ENCODE measurements at regions of chr3 and their contacts with region 1.

Region 1: DNA sequence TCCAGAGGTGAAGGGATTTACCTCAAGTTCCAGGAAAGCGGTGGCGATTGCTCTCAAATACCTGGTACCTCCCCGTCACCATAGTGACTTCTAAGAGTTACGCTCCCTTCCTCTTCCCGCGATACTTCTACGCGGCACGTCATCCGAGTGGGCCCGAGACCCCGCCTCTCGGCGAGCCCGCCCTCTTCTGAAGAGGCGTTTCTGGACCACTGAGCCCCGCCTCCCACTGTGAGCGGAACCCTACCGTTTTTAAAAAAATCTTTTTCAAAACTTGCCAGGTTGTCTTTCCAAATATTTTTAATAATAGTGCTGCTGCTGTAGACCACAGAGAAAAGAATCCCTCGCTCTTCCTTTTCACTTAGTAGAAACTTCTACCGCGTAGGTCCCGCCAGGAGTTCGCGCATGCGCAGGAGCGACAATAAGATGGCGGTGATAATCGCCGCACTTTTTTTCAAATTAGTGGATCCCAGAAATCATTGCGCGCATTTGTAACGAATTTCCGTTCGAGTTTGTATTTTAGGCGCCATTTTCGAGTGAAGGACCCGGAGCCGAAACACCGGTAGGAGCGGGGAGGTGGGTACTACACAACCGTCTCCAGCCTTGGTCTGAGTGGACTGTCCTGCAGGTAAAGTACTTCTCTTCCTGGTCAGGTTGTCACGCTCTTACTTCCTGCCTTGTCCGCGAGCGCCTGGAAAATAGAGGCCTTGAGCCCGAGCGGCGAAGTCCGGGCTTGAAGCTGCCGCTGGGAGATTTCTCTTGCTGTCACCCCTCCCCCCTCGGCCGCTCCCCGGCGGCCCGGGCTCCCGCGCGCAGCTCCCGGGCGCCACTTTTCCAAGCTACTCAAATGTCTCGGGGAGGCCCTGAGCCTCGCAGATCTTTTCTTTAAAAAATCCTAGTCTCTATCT is at the starts of genes IFT80 and SMC4:
- DNase-seq: peak; percentile 87 to 98 (median 96)
- ATAC-seq: peak; percentile 95
- H3K4me3 ChIP-seq: peak within 1 kb of the TSS; percentile 84 to 85
- H3K4me3 Mint-ChIP-seq: peak within 1 kb of the TSS; percentile 90
- H3K27ac ChIP-seq: peak within 1 kb of the TSS; percentile 85 to 92
- H3K27ac Mint-ChIP-seq: peak within 1 kb of the TSS; percentile 99
- H3K4me1 ChIP-seq: peaks cover 35% of the 10 kb centered on the region
- H3K4me1 Mint-ChIP-seq: peaks cover 56% of the 10 kb centered on the region
- H3K27me3 ChIP-seq: peaks cover 0 to 8% of the 10 kb centered on the region in 2 experiments
- H3K27me3 Mint-ChIP-seq: peaks cover 26% of the 10 kb centered on the region
- CTCF ChIP-seq: no peak
- total RNA-seq, gene IFT80: 9.9 to 12.7 TPM
- total RNA-seq, gene SMC4: 40.8 to 43.5 TPM

Region 2: GRCh38 chr3:159988617-159989271 is 410.6 kb before region 1 on chr3 and contains the start of gene IL12A:
- CTCF ChIA-PET with region 1: no interaction called
- POLR2A ChIA-PET with region 1: no interaction called
- intact Hi-C with region 1: loop called in 1 of 2 experiments (anchors 5 kb)
- DNase-seq: peak; percentile 68 to 89 (median 84)
- ATAC-seq: peak; percentile 98
- H3K4me3 ChIP-seq: peak within 1 kb of the TSS; percentile 70 to 74
- H3K4me3 Mint-ChIP-seq: peak within 1 kb of the TSS; percentile 87
- H3K27ac ChIP-seq: peak within 1 kb of the TSS; percentile 25 to 28
- H3K27ac Mint-ChIP-seq: peak within 1 kb of the TSS; percentile 27
- H3K4me1 ChIP-seq: peaks cover 15% of the 10 kb centered on the region
- H3K4me1 Mint-ChIP-seq: peaks cover 30% of the 10 kb centered on the region
- H3K27me3 ChIP-seq: no peaks in the 10 kb centered on the region
- H3K27me3 Mint-ChIP-seq: no peaks in the 10 kb centered on the region
- CTCF ChIP-seq: peak; percentile 86
- total RNA-seq, gene IL12A: 2.3 to 2.9 TPM

Region 3: DNA sequence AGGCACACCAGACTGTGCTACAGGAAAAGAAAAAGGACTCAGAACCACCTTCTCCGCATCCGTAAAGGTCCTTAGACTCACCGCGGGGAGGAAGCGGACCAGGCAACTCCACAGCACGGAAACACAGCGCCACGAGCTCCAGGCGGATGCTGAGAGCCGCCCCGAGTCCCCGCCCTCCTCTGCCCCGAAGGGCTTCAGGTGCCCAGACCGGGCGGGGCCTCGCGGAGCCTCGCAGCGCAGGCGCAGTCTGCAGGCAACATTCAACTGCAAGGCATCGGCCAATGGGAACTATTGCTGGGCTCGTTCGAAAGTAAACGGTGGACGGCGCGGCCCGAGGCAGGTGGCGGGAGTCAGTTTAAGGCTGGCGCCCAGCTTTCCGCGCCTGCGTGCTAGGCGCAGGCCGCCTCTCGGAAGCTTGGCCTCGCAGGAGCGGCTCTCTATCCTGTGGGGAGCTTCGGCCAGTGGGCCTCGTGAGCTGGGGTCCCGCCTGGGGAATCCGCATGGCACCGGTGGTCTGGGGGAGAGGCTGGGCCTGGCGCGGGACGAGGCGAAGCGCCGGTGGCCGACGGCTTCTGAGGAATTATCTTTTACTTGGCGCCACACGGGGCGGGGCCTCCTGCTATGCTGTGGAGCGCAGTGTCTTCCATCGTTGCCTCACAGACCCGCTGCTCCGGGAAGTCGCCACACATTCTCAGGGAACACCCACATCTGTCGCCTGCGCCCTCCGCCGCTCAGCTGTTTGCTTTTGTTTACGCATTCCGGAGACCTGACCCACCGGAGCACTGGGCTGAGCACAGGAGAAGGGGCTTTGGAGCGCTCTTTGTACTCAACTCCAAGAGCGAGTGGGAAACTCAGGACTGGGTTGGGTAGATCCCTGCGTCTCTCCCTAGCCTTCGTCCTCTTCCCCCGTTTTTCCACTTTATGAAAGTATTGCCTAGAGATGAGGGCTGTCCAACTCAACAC is 50.5 kb after region 1 on chr3 and contains the start of gene TRIM59:
- CTCF ChIA-PET with region 1: no interaction called
- POLR2A ChIA-PET with region 1: interaction called, 13 read pairs
- intact Hi-C with region 1: loop called (anchors 1 to 2 kb)
- DNase-seq: peak; percentile 92 to 99 (median 95)
- ATAC-seq: peak; percentile 96
- H3K4me3 ChIP-seq: peak within 1 kb of the TSS; percentile 80 to 91
- H3K4me3 Mint-ChIP-seq: peak within 1 kb of the TSS; percentile 95
- H3K27ac ChIP-seq: peak within 1 kb of the TSS; percentile 60 to 85
- H3K27ac Mint-ChIP-seq: peak within 1 kb of the TSS; percentile 93
- H3K4me1 ChIP-seq: peaks cover 22% of the 10 kb centered on the region
- H3K4me1 Mint-ChIP-seq: peaks cover 38% of the 10 kb centered on the region
- H3K27me3 ChIP-seq: no peaks in the 10 kb centered on the region
- H3K27me3 Mint-ChIP-seq: no peaks in the 10 kb centered on the region
- CTCF ChIP-seq: no peak
- total RNA-seq, gene TRIM59: 15.0 to 15.5 TPM

Region 4: DNA sequence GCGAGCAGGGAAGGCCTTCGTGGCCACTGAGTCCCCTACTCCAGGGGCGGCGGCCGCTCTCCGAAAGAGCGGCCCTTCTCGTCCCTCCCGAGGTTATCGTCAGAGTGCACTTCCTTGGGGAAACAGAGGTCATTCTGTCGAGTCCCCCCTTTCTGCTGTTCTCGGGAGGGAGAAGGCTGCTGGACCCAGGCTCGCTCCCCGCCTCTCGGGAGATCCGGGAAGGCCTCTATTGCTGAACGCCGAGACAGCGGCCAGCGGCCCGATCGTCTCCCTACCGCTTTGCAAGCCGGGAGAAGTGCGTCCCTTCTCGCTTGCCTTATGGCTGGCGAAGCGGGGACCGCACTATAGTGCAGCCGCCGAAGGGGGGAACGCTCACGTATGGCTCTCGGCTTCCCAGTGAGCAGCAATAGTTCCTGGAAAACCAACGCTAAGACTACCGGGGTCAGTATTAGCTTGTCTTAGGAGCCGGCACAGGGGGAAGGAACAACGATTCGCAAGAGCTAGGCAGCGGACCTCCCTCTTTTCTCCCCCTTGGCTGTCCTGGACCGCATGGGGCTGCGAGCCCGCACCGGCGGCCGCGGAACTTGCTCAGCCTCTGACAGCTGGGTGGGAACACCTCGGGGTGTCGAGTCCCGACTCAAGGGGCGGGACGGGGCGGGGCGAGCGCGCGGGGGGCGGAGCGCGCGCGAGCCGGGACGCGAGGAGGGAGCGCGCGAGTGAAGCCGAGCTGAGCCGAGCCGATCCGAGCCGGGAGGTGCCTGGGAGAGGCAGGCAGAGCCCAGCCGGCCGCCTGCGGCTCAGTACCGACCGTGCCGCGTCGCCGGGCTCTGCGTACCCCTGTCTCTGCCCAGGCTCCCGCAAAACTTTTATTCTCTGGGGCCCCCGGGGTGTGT is 355.7 kb after region 1 on chr3:
- CTCF ChIA-PET with region 1: no interaction called
- POLR2A ChIA-PET with region 1: no interaction called
- intact Hi-C with region 1: loop called in 1 of 2 experiments (anchors 5 kb)
- DNase-seq: peak; percentile 79 to 95 (median 89)
- ATAC-seq: peak; percentile 85
- H3K4me3 ChIP-seq: peak overlapping the region; percentile 79 to 90
- H3K4me3 Mint-ChIP-seq: peak overlapping the region; percentile 90
- H3K27ac ChIP-seq: peak overlapping the region; percentile 66 to 84
- H3K27ac Mint-ChIP-seq: peak overlapping the region; percentile 75
- H3K4me1 ChIP-seq: peaks cover 26% of the 10 kb centered on the region
- H3K4me1 Mint-ChIP-seq: peaks cover 33% of the 10 kb centered on the region
- H3K27me3 ChIP-seq: no peaks in the 10 kb centered on the region
- H3K27me3 Mint-ChIP-seq: peaks cover 13% of the 10 kb centered on the region
- CTCF ChIP-seq: no peak

Region 5: DNA sequence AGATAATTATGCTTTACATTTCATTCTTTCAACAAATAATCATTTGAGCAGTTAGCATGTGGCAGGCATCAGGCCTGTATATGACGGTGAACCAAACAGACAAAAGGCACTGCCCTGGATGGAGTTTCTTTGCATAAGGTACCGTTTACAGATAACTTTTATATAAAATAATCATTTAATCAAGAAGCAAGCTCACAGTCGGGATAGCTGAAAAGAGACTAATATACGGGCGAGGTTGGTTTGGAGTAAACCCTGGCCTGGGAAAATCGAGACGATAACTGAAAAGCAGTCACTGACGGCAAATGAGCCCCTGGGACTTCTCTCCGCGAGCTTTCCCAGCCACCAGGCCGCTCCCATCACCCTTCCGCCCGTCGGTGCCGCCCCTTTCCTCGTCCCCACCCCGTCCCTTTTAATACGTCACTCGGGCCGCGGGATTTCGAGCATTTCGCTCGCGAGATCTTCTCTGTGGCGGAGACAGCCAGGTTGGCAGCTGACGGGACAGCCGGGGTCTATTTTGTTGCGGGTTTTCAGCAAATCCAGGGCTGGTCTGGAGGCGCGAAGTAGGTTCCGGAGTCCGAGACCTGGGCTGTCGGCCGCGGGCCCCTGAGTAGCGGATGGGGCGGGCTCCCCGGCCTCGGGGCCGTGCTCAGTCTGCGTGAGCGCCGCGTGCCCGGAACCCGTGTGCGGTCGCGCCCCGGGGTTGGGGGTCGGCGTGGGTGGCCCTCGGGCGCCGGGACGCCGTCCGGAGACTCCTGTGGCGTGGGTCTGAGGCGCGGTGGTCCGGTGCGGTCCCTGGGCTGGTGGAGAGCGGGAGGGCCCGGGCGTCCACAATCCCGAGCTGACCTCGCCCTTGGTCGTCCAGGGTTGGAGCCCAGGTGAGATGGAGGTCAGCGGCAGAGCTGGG is 821.7 kb after region 1 on chr3 and contains the start of gene NMD3:
- CTCF ChIA-PET with region 1: no interaction called
- POLR2A ChIA-PET with region 1: no interaction called
- intact Hi-C with region 1: loop called (anchors 2 to 10 kb)
- DNase-seq: peak; percentile 84 to 94 (median 92)
- ATAC-seq: peak; percentile 97
- H3K4me3 ChIP-seq: peak within 1 kb of the TSS; percentile 85 to 95
- H3K4me3 Mint-ChIP-seq: peak within 1 kb of the TSS; percentile 87
- H3K27ac ChIP-seq: peak within 1 kb of the TSS; percentile 78 to 95
- H3K27ac Mint-ChIP-seq: peak within 1 kb of the TSS; percentile 95
- H3K4me1 ChIP-seq: peaks cover 25% of the 10 kb centered on the region
- H3K4me1 Mint-ChIP-seq: peaks cover 38% of the 10 kb centered on the region
- H3K27me3 ChIP-seq: no peaks in the 10 kb centered on the region
- H3K27me3 Mint-ChIP-seq: peaks cover 3% of the 10 kb centered on the region
- CTCF ChIP-seq: no peak
- total RNA-seq, gene NMD3: 53.2 to 54.6 TPM